ENCODE measurements at regions of chr20 and their contacts with region 1.

Region 1: DNA sequence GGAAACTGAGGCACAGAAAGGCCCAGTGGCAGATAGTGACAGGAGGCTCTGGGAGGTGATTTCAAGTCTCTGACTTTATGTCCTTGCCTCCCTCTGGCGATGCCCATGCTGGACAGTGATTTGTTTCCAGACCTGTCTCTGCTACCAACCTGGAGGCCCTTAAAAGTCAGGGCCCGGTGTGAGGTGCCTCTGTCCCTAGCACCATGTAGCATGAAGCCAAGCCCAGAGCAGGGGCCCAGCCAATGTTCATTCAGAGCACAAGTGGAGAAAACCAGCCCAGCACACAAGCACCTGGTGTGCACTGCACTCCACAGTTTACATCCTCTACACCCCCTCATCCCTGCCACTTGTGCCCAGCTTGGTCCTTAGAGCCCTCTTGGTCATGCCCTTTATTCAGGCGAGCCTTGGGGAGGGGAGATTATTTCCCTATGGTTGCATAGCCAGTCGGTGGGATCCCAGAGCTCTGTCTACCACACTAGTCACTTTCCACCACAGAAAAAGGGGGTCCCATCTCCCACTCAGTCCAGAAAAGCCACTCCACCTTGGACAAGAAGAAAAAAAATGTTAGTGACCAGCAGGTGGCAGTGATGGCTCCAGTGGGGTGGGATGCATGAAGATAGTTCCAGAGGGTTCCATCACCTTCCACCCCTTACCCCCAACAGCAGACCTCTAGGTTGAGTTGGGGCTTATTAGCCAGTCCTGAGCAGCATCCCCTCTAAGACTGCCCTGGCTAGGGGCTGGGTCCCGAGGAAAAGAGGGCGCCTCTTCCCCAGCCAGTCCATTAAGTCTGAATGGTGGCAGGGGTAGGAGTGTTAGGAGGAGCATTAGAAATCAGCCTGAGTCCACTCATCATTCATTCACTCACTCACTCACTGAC is 30.9 kb downstream of the KIAA1755 start:
- DNase-seq: no peak
- H3K4me3 ChIP-seq: no peak overlapping the region
- H3K27ac ChIP-seq: no peak overlapping the region
- H3K4me1 ChIP-seq: no peaks in the 10 kb centered on the region
- H3K27me3 ChIP-seq: no peaks in the 10 kb centered on the region
- CTCF ChIP-seq: peak in 4 of 5 experiments; percentile 32 to 37 (median 34)
- EP300 ChIP-seq: no peak
- POLR2A ChIP-seq: no peak

Region 2: DNA sequence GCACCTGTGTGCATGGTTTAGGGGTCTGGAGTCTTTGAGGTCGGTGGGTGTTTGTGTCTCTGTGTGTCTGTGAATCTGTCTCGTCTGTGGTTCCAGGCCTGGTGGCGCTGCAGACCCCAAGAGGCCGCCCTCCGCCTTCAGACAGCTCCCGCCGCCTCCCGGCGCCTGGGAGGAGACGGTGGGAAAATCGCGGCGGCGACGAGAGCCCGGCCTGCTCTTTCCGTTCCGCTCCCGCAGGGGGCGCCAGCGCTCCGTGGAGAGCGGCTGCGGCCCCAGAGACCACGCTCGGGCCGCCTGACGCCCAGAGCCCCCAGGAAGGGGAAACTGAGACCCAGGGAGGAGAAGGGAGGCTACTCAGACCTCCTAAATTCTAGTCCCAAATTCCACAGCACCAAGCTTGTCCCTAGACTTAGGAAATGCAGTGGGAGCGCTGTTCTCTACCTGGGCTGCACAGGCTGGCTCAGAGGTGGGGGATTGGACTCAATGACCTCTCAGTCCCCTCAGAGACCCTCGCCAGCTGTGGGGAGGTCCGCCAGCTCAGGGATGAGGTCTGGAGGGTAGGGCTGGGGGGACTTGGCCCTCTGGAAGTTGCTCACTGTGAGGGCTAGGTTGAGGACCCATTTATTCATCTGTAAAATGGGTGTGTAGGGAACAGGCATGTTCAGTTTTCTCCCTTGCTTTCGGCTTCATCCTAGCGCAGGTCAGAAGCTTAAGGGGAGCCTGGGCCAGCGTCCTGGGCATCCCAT is 665.1 kb before region 1 on chr20:
- in situ Hi-C with region 1: loop called in 1 of 4 experiments (anchors 25 kb)
- intact Hi-C with region 1: no loop called
- DNase-seq: peak; percentile 44
- H3K4me3 ChIP-seq: no peak overlapping the region
- H3K27ac ChIP-seq: no peak overlapping the region
- H3K4me1 ChIP-seq: peaks cover 4 to 5% (median 5%) of the 10 kb centered on the region in 4 donors
- H3K27me3 ChIP-seq: peaks cover 88% of the 10 kb centered on the region
- CTCF ChIP-seq: peak; percentile 71 to 89 (median 85)
- EP300 ChIP-seq: no peak
- POLR2A ChIP-seq: no peak